Activated T-helper 2 cell treated with anti-CD3 and anti-CD28 coated beads, Interferon-gamma antibody, Interleukin-2, Interleukin-4, amounts not matched to agents 10 μg/mL and 5 μg/mL and 100 μg/mL, durations not matched to agents 14 hours and 24 hours and 36 hours (primary cell): ENCODE measurements at regions of chr6 and their contacts with region 1.

Region 1: GRCh38 chr6:130132286-130132701 is 90.5 kb downstream of the SAMD3 start:
- DNase-seq: peak; percentile 77
- H3K4me3 Mint-ChIP-seq: peak overlapping the region; percentile 43
- H3K27ac Mint-ChIP-seq: peak overlapping the region; percentile 74
- H3K4me1 Mint-ChIP-seq: peaks cover 85% of the 10 kb centered on the region
- H3K27me3 Mint-ChIP-seq: no peaks in the 10 kb centered on the region

Region 2: DNA sequence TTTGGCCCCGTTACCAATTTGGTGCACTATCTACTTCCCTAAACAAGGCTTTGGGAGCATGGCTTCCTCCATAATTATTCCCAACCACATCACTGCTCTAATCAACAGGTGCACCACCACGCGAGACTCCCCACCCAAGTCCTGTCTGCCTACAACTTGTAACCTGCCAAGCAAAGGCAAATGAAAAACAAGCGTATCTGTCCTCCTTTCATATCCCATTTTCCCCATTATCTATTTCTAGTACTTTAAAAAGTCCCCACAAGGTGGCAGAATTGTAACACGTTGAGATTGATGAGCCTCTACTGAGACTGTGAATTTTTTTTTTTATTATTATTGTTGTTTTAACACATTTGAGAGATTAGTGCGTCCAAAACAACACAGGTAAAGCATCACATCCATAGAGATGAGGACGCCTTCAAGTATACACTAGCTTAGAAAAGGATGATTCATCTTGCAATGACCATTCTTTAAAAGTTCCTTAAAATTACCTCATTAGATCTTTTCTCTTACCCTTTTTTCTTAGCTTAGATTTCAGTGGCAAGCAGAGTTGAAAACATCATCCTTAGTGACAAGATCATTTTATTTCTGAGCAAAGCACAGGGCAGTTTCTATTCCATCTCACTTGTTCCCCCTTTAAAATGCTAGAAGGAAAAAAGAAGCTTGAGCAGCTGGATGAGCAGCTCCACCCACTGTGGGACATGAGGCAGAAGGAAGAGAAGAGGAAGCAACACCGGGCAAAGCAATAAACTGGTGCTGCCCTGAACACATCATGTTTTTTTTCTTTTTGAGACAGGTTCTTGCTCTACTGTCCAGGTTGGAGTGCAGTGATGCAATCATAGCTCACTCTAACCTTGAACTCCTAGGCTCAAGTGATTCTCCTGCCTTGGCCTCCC is 633.1 kb before region 1 on chr6:
- intact Hi-C with region 1: loop called (anchors 10 kb)
- DNase-seq: no peak
- H3K4me3 Mint-ChIP-seq: peak overlapping the region; percentile 36
- H3K27ac Mint-ChIP-seq: peak overlapping the region; percentile 0
- H3K4me1 Mint-ChIP-seq: peaks cover 48% of the 10 kb centered on the region
- H3K27me3 Mint-ChIP-seq: no peaks in the 10 kb centered on the region

Region 3: DNA sequence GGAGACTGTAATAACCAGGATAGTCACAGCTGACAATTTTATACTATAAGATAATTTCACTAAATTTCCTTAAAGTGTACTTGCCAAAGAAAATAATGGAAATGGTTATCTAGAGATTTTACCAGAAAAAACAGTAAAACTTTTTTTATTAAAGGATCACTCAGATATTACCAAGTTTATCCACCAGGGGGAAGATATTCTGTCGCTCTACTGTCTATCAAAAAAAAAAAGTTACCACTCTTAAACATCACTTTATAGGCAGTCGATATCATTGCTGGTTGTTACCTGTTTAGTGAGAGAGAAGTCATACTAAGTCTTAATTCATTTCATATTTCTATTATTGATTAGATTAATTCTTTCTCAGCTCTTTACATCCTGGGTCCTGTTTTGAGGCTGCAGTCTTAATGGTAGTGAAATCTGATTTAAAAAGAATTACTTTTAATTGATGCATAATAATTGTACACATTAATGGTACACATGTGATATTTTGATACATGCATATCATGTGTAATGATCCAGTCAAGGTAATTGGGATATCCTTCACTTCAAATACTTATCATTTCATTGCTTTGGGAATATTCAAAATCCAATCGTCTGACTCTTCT is 95.0 kb before region 1 on chr6:
- intact Hi-C with region 1: loop called (anchors 1 kb)
- DNase-seq: no peak
- H3K4me3 Mint-ChIP-seq: no peak overlapping the region
- H3K27ac Mint-ChIP-seq: no peak overlapping the region
- H3K4me1 Mint-ChIP-seq: peaks cover 34% of the 10 kb centered on the region
- H3K27me3 Mint-ChIP-seq: no peaks in the 10 kb centered on the region

Region 4: DNA sequence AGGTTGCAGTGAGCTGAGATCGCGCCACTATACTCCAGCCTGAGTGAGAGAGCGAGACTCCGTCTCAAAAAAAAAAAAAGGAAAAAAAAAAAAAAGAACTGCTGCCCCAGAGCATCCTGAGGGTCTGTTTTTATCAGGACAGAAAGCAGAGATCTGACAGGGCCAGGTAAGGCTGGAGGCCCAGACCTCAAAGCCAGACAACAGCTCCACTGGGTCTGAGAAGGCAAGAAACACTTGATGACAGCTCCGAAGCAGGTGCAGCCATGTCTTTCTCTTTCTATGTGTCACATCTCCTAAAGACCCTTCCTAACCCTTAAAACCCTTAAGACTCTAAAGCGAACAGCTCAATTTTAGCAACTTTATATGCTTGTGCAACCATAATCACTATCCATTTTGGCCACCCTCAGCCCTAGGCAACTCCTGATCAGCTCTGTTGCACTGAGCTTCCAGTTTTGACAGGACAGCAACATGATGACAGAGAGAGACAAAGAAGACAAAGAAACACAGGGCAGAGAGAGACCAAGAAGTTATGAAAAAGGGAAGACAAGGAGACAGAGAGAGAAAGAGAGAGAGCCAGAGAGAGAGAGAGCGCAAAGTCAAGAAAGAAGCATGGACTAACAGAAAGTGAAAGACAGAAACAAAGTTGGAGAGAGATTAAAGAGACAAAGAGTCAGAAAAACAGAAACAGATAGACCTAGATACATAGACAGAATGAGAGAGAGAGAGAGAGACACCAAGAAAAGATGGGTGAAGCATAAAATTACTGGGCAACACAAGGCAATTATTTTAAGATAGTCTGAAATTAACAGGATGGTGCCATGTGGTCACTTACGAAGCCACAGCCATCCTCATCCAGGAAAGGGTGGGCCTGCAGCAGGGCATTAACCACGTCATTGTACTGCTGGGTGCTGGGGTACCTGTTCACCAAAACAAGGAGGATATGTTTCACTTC is 51.3 kb after region 1 on chr6:
- intact Hi-C with region 1: loop called (anchors 2 kb)
- DNase-seq: peak; percentile 39
- H3K4me3 Mint-ChIP-seq: peak overlapping the region; percentile 67
- H3K27ac Mint-ChIP-seq: peak overlapping the region; percentile 87
- H3K4me1 Mint-ChIP-seq: peaks cover 39% of the 10 kb centered on the region
- H3K27me3 Mint-ChIP-seq: no peaks in the 10 kb centered on the region

Region 5: GRCh38 chr6:130223508-130223907 is 91.2 kb after region 1 on chr6:
- intact Hi-C with region 1: loop called (anchors 1 kb)
- DNase-seq: peak; percentile 73
- H3K4me3 Mint-ChIP-seq: no peak overlapping the region
- H3K27ac Mint-ChIP-seq: peak overlapping the region; percentile 24
- H3K4me1 Mint-ChIP-seq: peaks cover 24% of the 10 kb centered on the region
- H3K27me3 Mint-ChIP-seq: no peaks in the 10 kb centered on the region

Region 6: GRCh38 chr6:130282234-130282995 is 150.1 kb after region 1 on chr6:
- intact Hi-C with region 1: loop called (anchors 1 kb)
- DNase-seq: no peak
- H3K4me3 Mint-ChIP-seq: no peak overlapping the region
- H3K27ac Mint-ChIP-seq: no peak overlapping the region
- H3K4me1 Mint-ChIP-seq: peaks cover 11% of the 10 kb centered on the region
- H3K27me3 Mint-ChIP-seq: no peaks in the 10 kb centered on the region

Region 7: GRCh38 chr6:130625825-130626527 is 493.7 kb after region 1 on chr6:
- intact Hi-C with region 1: loop called (anchors 5 kb)
- DNase-seq: no peak
- H3K4me3 Mint-ChIP-seq: peak overlapping the region; percentile 30
- H3K27ac Mint-ChIP-seq: peak overlapping the region; percentile 90
- H3K4me1 Mint-ChIP-seq: peaks cover 61% of the 10 kb centered on the region
- H3K27me3 Mint-ChIP-seq: no peaks in the 10 kb centered on the region